Naive thymus-derived CD4-positive, alpha-beta T cell (primary cell): ENCODE measurements at regions of chr6 and their contacts with region 1.

Region 1: GRCh38 chr6:87436435-87436834 is 28.7 kb downstream of the CFAP206 start:
- DNase-seq: peak; percentile 8 to 51 (median 44)
- ATAC-seq: peak; percentile 83
- H3K4me3 ChIP-seq: no peak overlapping the region
- H3K4me3 Mint-ChIP-seq: no peak overlapping the region
- H3K27ac ChIP-seq: no peak overlapping the region
- H3K27ac Mint-ChIP-seq: no peak overlapping the region
- H3K4me1 ChIP-seq: no peaks in the 10 kb centered on the region
- H3K4me1 Mint-ChIP-seq: no peaks in the 10 kb centered on the region
- H3K27me3 ChIP-seq: peaks cover 0 to 3% of the 10 kb centered on the region in 2 donors
- H3K27me3 Mint-ChIP-seq: peaks cover 5 to 41% (median 16%) of the 10 kb centered on the region in 5 donors

Region 2: DNA sequence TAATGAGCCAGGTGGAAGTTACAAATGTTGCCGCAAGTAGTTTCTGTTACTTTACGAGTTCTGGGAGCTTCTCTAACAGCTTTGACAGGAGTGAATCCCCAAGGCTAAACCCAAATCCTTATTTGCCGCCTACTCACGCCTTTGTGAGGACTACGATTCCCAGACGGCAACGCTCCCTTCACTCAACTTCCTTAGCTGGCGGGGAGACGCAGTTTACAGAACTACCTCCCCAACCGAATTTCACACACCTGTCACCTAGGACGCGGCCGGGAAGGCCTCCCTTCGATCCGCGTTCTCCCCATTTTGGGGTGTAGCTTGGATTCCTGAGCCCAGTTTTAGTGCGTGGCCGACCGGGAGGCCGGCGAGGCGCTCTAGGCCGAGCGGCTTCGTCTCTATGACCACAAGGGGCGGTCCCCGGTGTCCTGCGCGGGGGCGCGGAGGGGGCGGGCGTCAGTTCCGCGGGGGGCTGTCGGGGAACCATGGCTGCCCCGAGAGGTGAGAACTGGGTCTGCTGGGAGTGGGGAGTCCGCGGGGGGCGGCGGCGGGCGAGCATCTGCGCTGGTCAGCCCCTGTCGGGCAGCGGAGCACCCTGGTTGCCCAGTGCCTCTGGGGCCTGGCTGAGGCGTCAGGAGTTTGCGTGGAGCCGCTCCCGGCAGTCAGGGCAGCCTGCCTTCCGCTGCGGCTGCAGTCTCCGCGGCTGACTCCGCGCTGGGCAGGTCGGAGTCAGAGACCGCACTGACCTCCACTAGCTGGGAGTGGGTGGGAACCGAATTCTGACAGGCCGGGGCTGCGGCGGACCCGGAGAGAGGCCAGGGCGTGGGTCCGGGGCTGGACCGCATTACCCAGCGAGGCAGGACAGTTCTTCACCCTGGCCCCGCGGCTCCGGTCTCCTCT is 36.3 kb after region 1 on chr6 and contains the start of gene SLC35A1:
- CTCF ChIA-PET with region 1: no interaction called
- POLR2A ChIA-PET with region 1: no interaction called
- intact Hi-C with region 1: loop called in 1 of 2 experiments (anchors 2 kb)
- DNase-seq: peak; percentile 78 to 92 (median 87)
- ATAC-seq: peak; percentile 97
- H3K4me3 ChIP-seq: peak within 1 kb of the TSS; percentile 81
- H3K4me3 Mint-ChIP-seq: peak within 1 kb of the TSS; percentile 88 to 99 (median 98)
- H3K27ac ChIP-seq: peak within 1 kb of the TSS; percentile 93
- H3K27ac Mint-ChIP-seq: peak within 1 kb of the TSS; percentile 95 to 100 (median 99)
- H3K4me1 ChIP-seq: peaks cover 9 to 11% of the 10 kb centered on the region in 2 donors
- H3K4me1 Mint-ChIP-seq: peaks cover 14 to 31% (median 20%) of the 10 kb centered on the region in 7 donors
- H3K27me3 ChIP-seq: no peaks in the 10 kb centered on the region
- H3K27me3 Mint-ChIP-seq: peaks cover 2 to 14% (median 9%) of the 10 kb centered on the region in 5 donors
- total RNA-seq, gene SLC35A1: 10.4 to 23.4 (median 15.6) TPM